PC-9 (cell line): ENCODE measurements at regions of chrX and their contacts with region 1.

Region 1: GRCh38 chrX:8820910-8821527 is 19.8 kb upstream of the FAM9A start:
- DNase-seq: peak in 1 of 2 experiments; percentile 36
- H3K4me3 ChIP-seq: no peak overlapping the region
- H3K27ac ChIP-seq: no peak overlapping the region
- H3K4me1 ChIP-seq: peaks cover 3% of the 10 kb centered on the region; the same call in 1 of the 2 replicates
- H3K27me3 ChIP-seq: no peaks in the 10 kb centered on the region
- CTCF ChIP-seq: peak; percentile 26; the same call in 1 of the 2 replicates

Region 2: DNA sequence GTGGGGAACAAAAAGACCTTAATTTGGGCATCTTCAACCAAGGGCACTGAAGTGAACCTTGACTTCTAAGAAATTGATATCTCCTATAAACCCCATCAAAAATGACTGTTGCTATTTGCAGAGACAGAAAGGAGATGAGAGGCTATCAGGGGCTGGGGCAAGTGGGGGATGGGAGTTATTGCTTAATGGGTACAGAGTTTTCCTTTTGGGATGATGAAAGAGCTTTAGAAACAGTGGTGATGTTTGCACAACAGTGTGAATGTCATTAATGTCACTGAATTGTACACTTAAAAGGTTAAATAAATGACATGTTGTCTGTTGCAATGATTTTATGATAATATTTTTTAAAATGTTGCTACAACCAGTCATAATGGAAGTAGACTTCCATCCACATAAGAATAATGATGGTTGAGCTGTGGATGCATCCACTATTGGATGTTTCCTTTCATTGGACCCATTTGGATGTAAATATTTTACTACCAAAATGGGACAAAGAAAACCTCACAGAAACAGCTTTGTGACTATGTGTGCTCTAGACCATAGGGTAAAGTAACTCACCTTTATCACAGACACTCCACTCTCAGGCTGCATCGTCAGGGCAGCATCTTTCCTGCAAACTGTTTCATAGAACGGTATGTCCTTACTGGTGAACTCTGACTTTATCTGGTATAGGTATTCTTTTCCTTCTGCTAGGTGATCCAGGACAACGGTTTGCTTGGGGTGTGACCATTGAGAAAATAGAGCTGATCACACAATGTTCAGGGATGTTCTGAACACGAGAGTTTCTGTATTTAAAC is 11.8 kb after region 1 on chrX:
- CTCF ChIA-PET with region 1: no interaction called
- POLR2A ChIA-PET with region 1: no interaction called
- intact Hi-C with region 1: no loop called
- DNase-seq: no peak
- H3K4me3 ChIP-seq: no peak overlapping the region
- H3K27ac ChIP-seq: no peak overlapping the region
- H3K4me1 ChIP-seq: no peaks in the 10 kb centered on the region
- H3K27me3 ChIP-seq: no peaks in the 10 kb centered on the region
- CTCF ChIP-seq: no peak

Region 3: GRCh38 chrX:8879750-8880149 is 58.7 kb after region 1 on chrX:
- CTCF ChIA-PET with region 1: no interaction called
- POLR2A ChIA-PET with region 1: no interaction called
- intact Hi-C with region 1: loop called (anchors 10 kb)
- DNase-seq: peak in 1 of 2 experiments; percentile 24
- H3K4me3 ChIP-seq: no peak overlapping the region
- H3K27ac ChIP-seq: no peak overlapping the region
- H3K4me1 ChIP-seq: no peaks in the 10 kb centered on the region
- H3K27me3 ChIP-seq: no peaks in the 10 kb centered on the region
- CTCF ChIP-seq: peak; percentile 56; the same call in 1 of the 2 replicates

Region 4: DNA sequence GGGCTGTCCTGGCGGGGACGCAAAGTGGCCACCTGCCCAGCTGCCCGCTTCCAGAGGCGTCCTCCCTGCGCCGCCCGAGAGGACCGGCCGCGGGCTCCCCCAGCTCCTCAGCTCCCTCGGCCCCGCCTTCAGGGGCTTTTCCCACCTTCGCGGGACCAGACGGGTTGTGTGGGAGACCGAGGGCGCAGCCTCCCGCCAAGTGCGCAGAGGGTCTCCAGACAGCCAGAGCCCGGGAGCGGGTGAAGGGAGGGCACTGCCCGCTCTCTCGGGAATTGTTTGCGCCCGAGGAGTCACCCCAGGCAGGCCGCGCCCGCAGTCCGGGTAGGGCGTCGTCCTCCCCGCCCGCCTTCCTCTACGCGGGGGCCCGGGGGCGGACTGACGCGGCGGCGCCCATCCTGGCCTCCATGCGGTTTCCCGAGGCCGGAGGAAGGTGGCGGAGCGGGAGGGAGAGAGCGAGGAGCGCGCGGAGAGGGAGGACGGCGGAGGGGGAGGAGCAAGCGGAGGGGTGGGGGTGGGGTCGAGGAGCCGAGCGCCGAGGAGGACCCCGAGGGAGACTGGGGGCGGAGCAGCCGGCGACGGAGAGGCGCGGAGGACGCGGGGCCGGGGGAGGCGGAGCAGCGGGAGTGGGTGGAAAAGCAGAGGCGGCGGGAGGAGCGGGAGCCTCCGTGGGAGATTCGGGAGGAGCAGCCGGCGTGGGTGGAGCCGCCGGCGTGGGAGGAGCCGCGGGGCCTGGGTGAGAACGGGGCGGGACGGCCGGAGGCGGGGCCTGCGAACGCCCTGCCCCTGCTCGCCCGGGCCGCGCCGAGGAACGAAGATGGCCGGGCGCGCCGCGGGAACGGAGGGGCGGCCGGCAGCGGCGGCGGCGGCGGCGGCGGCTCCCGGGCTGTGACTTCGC is 1193.7 kb after region 1 on chrX:
- CTCF ChIA-PET with region 1: interaction called, 10 read pairs
- POLR2A ChIA-PET with region 1: no interaction called
- intact Hi-C with region 1: no loop called
- DNase-seq: peak; percentile 63 to 92
- H3K4me3 ChIP-seq: peak overlapping the region; percentile 69
- H3K27ac ChIP-seq: peak overlapping the region; percentile 72
- H3K4me1 ChIP-seq: peaks cover 46% of the 10 kb centered on the region
- H3K27me3 ChIP-seq: no peaks in the 10 kb centered on the region
- CTCF ChIP-seq: no peak